BJ (cell line): ENCODE measurements at regions of chr6 and their contacts with region 1.

Region 1: GRCh38 chr6:47097092-47097945 is 55.2 kb upstream of the ADGRF1 start:
- DNase-seq: peak; percentile 23
- H3K4me3 ChIP-seq: no peak overlapping the region
- H3K27me3 ChIP-seq: no peaks in the 10 kb centered on the region
- CTCF ChIP-seq: peak; percentile 81

Region 2: DNA sequence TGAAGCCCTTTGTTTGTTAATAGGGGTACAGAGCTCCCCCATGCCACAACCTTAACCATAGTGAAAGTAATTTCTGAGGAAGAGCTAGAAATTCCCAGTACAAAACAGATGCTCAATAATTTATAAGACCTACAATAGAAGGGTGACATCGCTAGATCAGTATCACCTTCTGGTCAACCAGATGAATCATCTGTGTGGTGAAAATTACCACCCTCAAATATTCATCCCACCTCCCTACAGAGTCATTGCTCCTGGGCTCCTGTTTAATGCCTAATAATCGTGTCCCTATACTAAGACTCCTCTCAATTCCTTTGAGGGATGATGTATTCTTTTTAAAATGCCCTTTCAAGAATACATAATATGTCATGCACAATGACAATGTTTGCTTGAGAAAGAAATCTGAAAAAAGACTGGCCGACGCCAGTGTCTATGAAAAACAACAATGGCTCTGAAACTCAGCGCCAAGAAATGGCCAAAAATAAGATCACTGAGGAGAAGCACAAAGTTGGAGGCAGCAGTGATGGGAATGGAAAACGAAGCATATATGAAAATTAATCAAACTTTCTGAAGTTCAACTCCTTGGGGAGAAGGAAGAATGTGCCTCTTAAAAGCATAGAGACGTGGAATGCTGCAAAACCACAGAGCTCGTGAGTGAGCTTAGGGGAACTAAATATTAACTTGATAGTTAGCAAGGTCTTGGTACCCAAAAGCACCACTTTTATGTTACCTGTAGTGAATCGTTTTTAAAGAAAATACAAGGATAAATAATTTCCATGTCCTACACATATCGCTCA is 164.6 kb before region 1 on chr6:
- CTCF ChIA-PET with region 1: no interaction called
- POLR2A ChIA-PET with region 1: no interaction called
- DNase-seq: no peak
- H3K4me3 ChIP-seq: no peak overlapping the region
- H3K27me3 ChIP-seq: no peaks in the 10 kb centered on the region; the same call in 1 of the 2 replicates
- CTCF ChIP-seq: no peak

Region 3: DNA sequence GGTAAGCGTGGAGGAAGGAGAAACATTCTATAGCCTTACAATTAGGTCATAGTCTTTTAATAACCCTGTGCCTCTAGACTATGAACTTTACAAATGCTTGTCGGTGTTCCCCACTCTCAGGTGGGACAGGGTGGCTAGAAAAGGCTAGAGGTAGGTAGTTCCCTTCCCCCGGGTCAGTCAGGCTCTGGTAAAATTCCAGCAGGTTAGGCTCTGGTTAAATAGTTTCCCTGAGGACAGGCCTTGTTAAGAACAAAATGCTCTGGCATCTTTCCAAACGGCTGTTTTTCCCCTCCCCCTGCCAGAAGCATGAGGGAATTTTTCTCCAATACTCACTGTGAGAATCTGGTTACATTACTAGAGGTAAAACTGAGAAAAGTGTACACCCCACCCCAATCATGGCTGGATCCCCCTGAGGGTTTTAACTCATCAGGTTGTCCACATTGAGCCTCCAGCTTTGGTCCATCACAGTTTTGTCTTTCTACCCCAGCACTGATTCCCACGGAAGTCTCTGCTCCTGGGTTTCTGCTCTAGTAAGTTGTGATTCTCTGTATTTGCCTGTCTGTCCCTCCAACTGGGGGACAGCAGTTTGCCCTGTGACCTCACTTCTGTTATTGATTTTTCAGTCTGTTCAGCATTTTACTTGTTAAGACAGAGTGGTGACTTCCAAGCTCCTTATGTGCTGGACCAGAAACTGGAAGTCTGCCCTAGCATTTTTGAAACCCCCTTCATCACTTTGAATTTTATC is 29.5 kb after region 1 on chr6:
- CTCF ChIA-PET with region 1: no interaction called
- POLR2A ChIA-PET with region 1: no interaction called
- DNase-seq: no peak
- H3K4me3 ChIP-seq: no peak overlapping the region
- H3K27me3 ChIP-seq: no peaks in the 10 kb centered on the region
- CTCF ChIP-seq: no peak

Region 4: GRCh38 chr6:47278550-47278949 is 181.2 kb after region 1 on chr6:
- CTCF ChIA-PET with region 1: interaction called, 10 read pairs
- POLR2A ChIA-PET with region 1: no interaction called
- DNase-seq: no peak
- H3K4me3 ChIP-seq: no peak overlapping the region
- H3K27me3 ChIP-seq: no peaks in the 10 kb centered on the region
- CTCF ChIP-seq: no peak

Region 5: DNA sequence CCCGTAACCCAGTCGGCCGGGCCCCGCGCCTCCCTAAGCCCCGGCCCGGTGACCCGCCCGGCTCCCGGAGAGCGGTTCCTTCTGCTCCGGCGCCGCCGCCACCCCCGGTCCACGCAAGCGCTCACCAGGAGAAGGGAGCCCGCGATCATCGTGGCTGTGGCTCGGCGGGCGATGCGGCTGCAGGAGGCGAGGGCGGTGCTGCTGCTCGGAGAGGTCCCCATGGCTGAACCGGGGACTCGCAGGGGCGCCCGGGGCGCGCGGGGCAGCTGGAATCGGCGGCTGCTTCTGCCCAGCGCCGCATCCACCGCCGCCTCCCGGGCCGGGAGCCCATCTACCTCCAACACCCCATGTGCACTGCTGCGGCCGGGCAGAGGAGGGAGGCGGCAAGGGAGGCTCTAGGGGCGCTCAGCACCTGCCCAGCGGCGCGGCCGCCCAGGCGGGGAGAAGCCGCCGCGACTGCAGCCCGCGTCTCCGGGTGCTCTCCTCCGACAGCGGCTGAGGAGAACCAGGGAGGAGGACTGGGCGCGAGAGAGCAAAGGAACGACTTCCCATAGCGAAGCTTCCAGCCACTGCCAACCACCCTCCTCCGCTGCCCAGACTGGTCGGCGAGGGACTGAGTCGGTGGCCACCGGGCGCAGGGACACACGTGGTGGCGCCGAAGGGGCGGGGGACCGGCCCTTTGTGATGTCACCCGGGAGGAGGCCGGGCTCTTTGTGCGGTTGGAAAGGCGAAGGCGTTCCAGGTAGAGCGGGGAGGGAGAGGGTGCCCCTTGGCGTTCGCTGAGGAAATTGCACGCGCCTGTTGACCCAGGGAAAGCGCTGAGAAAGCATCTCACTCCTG is 212.2 kb after region 1 on chr6 and contains the start of gene TNFRSF21:
- CTCF ChIA-PET with region 1: interaction called, 175 read pairs
- POLR2A ChIA-PET with region 1: no interaction called
- DNase-seq: peak; percentile 26
- H3K4me3 ChIP-seq: peak within 1 kb of the TSS; percentile 66
- H3K27me3 ChIP-seq: no peaks in the 10 kb centered on the region
- CTCF ChIP-seq: peak; percentile 98
- polyA plus RNA-seq, gene TNFRSF21: 2.4 and 3.6 TPM in 2 replicates